ENCODE measurements at regions of chr14 and their contacts with region 1.

Region 1: DNA sequence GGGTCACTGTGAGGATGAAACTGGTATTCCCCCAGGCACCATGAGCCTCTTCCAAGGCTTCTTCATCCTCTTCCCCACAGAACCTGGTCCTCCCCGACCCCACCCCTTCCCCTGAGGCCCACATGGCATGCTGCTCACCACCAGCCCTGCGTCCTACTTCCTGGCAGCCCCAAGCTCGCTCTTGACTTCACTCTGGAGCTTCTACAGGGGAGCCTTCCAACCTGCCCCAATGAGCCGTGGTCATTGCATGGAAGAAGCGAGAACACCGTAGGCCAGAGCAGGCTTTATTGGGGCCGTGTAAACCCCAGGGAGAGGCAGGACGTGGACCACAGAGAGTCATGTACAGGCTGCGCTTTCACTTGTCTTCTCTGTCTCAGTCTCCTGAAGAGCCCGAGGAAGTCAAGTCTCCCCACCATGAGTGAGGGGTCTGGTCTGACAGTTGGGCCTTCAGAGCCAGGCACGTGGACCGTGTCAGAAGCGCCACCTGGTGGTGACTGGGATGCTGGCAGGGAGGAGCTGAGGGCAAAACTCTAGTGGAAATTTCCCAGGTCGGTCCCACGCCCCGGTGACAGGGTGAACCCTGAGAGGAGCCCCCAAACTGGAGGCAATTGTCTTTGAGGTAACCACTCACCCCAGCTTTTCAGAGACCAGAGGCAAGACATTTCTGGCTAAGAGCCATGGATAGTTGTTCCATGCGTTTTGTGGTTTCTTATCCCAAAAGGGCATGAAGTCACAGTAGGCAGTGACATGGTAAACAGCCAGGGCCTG is 17.5 kb downstream of the RPS6KL1 start:
- DNase-seq: peak; percentile 59
- H3K4me3 Mint-ChIP-seq: no peak overlapping the region
- H3K27ac Mint-ChIP-seq: no peak overlapping the region
- H3K4me1 Mint-ChIP-seq: no peaks in the 10 kb centered on the region
- H3K27me3 Mint-ChIP-seq: no peaks in the 10 kb centered on the region
- CTCF ChIP-seq: peak; percentile 83

Region 2: GRCh38 chr14:74860906-74861733 is 44.4 kb before region 1 on chr14:
- CTCF ChIA-PET with region 1: interaction called, 182 read pairs
- POLR2A ChIA-PET with region 1: interaction called, 26 read pairs
- intact Hi-C with region 1: loop called (anchors 1 kb)
- DNase-seq: peak; percentile 89
- H3K4me3 Mint-ChIP-seq: no peak overlapping the region
- H3K27ac Mint-ChIP-seq: no peak overlapping the region
- H3K4me1 Mint-ChIP-seq: no peaks in the 10 kb centered on the region
- H3K27me3 Mint-ChIP-seq: peaks cover 6% of the 10 kb centered on the region
- CTCF ChIP-seq: peak; percentile 64

Region 3: GRCh38 chr14:74867673-74868072 is 37.9 kb before region 1 on chr14:
- CTCF ChIA-PET with region 1: interaction called, 182 read pairs
- POLR2A ChIA-PET with region 1: interaction called, 26 read pairs
- intact Hi-C with region 1: no loop called
- DNase-seq: no peak
- H3K4me3 Mint-ChIP-seq: no peak overlapping the region
- H3K27ac Mint-ChIP-seq: no peak overlapping the region
- H3K4me1 Mint-ChIP-seq: no peaks in the 10 kb centered on the region
- H3K27me3 Mint-ChIP-seq: peaks cover 23% of the 10 kb centered on the region
- CTCF ChIP-seq: no peak

Region 4: DNA sequence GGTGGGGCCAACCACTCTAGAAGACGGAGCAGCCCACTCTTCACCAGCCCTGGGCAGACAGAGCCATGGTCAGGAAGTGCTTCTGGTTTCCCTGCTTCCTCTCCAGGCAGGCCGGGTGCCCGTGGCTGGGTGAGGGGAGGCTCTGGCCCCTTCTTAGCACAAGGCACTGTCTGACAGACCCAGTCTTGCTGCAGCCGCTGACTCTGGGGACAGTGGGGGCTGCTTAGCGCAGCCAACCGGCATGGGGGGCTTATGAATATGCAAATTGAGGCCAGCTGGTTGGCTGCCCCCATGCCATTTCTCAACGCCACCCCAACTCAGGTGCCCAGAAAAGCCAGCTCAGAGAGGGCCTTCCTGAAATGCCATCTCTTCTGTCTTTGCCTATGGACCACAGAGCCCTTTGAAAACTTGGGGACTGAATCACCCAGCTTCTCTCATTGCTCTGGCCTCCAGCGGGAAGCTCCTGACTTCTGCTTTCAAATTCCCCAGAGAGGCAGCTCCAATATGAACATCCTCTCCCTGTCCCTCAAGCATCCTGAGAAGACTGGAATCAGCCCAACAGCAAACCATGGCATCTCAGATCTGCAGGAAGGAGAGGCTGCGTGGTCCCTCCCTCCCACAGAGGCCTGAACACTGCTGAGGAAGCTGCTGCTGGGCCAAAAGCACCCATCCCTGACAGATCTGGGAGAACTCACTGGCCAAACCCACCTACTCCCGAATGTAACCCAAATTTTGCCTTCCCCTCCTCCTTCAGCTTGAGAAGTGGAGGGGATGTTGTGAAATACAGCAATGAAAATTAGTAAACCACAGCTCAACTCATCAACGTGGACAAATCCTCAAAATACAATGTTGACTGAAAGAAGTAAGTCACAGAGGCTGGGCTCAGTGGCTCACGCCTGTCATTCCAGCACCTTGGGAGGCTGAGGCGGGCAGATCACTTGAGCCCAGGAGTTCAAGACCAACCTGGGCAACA is 29.3 kb before region 1 on chr14 and contains the start of gene PROX2:
- CTCF ChIA-PET with region 1: interaction called, 70 read pairs
- POLR2A ChIA-PET with region 1: interaction called, 32 read pairs
- intact Hi-C with region 1: loop called (anchors 1 kb)
- DNase-seq: no peak
- H3K4me3 Mint-ChIP-seq: no peak within 1 kb of the TSS
- H3K27ac Mint-ChIP-seq: no peak within 1 kb of the TSS
- H3K4me1 Mint-ChIP-seq: peaks cover 11% of the 10 kb centered on the region
- H3K27me3 Mint-ChIP-seq: no peaks in the 10 kb centered on the region
- CTCF ChIP-seq: no peak
- total RNA-seq, gene PROX2: not detected in 2 replicates

Region 5: DNA sequence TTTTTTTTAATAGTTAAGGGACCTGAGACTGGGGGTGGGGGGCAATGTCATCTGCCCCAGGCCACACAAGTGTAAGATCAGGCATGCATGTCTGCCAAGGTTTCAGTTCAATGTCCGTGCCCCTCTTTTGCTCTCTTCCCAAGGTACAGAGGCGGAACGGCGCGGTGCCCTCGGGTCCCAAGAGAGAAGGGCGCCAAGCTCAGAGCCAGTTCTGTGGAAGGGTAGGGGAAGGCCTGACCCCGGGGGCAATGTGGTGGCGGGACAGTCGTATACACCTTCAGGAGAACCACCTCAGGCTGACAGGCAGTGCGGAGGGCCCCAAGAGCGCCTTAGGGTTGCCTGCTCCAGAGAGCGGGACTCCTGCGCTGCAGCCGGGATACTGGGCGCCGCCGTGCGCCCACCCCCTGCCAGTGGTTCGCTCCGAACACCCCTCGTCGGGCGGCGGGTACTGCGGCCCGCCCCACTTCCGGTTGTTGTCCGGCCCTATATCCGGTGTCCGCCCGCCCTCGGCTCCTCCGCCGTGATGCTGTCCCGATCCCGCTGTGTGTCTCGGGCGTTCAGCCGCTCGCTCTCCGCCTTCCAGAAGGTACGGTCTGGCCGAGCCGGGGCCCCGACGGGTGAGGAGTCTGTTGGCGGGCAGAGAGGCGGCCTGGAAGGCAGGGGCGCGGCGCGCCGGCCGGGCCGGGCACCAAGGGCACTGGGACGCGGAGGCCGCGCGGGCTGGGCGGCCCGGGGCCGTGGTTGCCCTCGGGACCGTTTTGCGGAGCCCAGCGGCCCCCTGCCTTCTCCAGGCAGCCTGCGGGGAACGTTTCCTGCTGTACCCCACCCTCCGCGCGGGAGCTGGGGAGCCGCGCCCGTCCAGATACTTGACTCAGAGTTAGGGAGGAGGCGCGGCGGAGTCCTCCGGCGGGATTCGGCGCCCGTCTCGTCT is 23.9 kb before region 1 on chr14 and contains the start of gene DLST:
- CTCF ChIA-PET with region 1: interaction called, 70 read pairs
- POLR2A ChIA-PET with region 1: interaction called, 32 read pairs
- intact Hi-C with region 1: loop called (anchors 1 kb)
- DNase-seq: peak; percentile 84
- H3K4me3 Mint-ChIP-seq: peak within 1 kb of the TSS; percentile 99
- H3K27ac Mint-ChIP-seq: peak within 1 kb of the TSS; percentile 99
- H3K4me1 Mint-ChIP-seq: peaks cover 50% of the 10 kb centered on the region
- H3K27me3 Mint-ChIP-seq: no peaks in the 10 kb centered on the region
- CTCF ChIP-seq: no peak
- total RNA-seq, gene DLST: 114 and 139 TPM in 2 replicates

Region 6: GRCh38 chr14:74888164-74889158 is 17.1 kb before region 1 on chr14:
- CTCF ChIA-PET with region 1: interaction called, 127 read pairs
- POLR2A ChIA-PET with region 1: interaction called, 32 read pairs
- intact Hi-C with region 1: loop called (anchors 2 kb)
- DNase-seq: peak; percentile 57
- H3K4me3 Mint-ChIP-seq: peak overlapping the region; percentile 24
- H3K27ac Mint-ChIP-seq: peak overlapping the region; percentile 71
- H3K4me1 Mint-ChIP-seq: peaks cover 44% of the 10 kb centered on the region
- H3K27me3 Mint-ChIP-seq: no peaks in the 10 kb centered on the region
- CTCF ChIP-seq: no peak

Region 7: GRCh38 chr14:74893614-74894091 is 11.9 kb before region 1 on chr14:
- CTCF ChIA-PET with region 1: interaction called, 127 read pairs
- POLR2A ChIA-PET with region 1: interaction called, 5 read pairs
- intact Hi-C with region 1: loop called (anchors 2 kb)
- DNase-seq: no peak
- H3K4me3 Mint-ChIP-seq: no peak overlapping the region
- H3K27ac Mint-ChIP-seq: no peak overlapping the region
- H3K4me1 Mint-ChIP-seq: peaks cover 5% of the 10 kb centered on the region
- H3K27me3 Mint-ChIP-seq: no peaks in the 10 kb centered on the region
- CTCF ChIP-seq: no peak